ENCODE measurements at regions of chr5 and their contacts with region 1.

Region 1: DNA sequence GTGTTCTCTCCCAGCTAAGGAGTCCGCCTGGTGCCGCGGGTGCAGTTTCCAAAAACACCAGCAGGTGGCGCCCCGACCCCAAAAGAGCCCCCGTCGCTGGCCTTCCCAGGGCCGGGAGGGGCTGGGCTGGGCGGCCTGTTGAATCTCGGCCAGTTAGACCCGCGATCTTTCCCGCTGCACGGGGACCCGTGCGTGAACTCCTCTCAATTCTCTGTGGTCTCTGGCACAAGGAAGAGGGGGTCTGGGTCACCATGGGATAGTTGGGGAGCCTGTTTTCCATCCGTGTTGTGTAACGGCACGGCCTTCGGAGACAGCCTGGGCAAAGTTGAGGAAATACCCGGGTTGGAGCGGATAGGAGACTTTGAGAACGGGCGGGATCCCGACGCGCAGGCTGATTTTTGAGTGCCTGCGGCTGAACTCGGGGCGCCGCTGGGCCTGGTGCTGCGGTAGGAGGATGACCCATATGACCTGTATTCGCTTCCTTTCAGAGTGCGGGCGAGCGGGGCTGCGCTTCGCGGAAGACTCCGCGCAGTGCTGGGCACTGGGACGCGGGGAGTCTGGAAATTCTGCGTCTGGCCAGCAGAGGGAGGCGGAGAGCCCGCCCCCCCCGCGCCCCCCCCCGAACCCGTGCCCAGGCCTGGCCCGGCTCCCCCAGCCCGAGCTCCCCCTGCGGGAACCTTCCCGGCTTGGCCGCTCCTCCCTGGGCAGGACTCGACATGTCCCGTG is 7.9 kb upstream of the PSD2 start:
- DNase-seq: peak; percentile 61 to 91 (median 81)
- ATAC-seq: peak; percentile 81
- H3K4me3 ChIP-seq: peak overlapping the region; percentile 65
- H3K4me3 Mint-ChIP-seq: peak overlapping the region; percentile 77
- H3K27ac ChIP-seq: no peak overlapping the region
- H3K27ac Mint-ChIP-seq: no peak overlapping the region
- H3K4me1 ChIP-seq: peaks cover 17% of the 10 kb centered on the region
- H3K4me1 Mint-ChIP-seq: peaks cover 6% of the 10 kb centered on the region
- H3K27me3 ChIP-seq: peaks cover 10 to 20% of the 10 kb centered on the region in 2 experiments
- H3K27me3 Mint-ChIP-seq: peaks cover 44% of the 10 kb centered on the region
- CTCF ChIP-seq: peak; percentile 94

Region 2: GRCh38 chr5:139765409-139766217 is 22.1 kb before region 1 on chr5:
- CTCF ChIA-PET with region 1: interaction called, 21 read pairs
- POLR2A ChIA-PET with region 1: no interaction called
- intact Hi-C with region 1: no loop called
- DNase-seq: peak; percentile 71 to 92 (median 78)
- ATAC-seq: peak; percentile 92
- H3K4me3 ChIP-seq: peak overlapping the region; percentile 60
- H3K4me3 Mint-ChIP-seq: peak overlapping the region; percentile 48
- H3K27ac ChIP-seq: no peak overlapping the region
- H3K27ac Mint-ChIP-seq: no peak overlapping the region
- H3K4me1 ChIP-seq: peaks cover 19% of the 10 kb centered on the region
- H3K4me1 Mint-ChIP-seq: peaks cover 9% of the 10 kb centered on the region
- H3K27me3 ChIP-seq: peaks cover 29 to 30% of the 10 kb centered on the region in 2 experiments
- H3K27me3 Mint-ChIP-seq: peaks cover 50% of the 10 kb centered on the region
- CTCF ChIP-seq: peak; percentile 100

Region 3: GRCh38 chr5:139774980-139775661 is 12.6 kb before region 1 on chr5:
- CTCF ChIA-PET with region 1: interaction called, 19 read pairs
- POLR2A ChIA-PET with region 1: no interaction called
- intact Hi-C with region 1: no loop called
- DNase-seq: peak; percentile 64 to 84 (median 74)
- ATAC-seq: peak; percentile 99
- H3K4me3 ChIP-seq: no peak overlapping the region
- H3K4me3 Mint-ChIP-seq: no peak overlapping the region
- H3K27ac ChIP-seq: no peak overlapping the region
- H3K27ac Mint-ChIP-seq: no peak overlapping the region
- H3K4me1 ChIP-seq: peaks cover 8% of the 10 kb centered on the region
- H3K4me1 Mint-ChIP-seq: no peaks in the 10 kb centered on the region
- H3K27me3 ChIP-seq: no peaks in the 10 kb centered on the region
- H3K27me3 Mint-ChIP-seq: peaks cover 22% of the 10 kb centered on the region
- CTCF ChIP-seq: peak; percentile 77

Region 4: DNA sequence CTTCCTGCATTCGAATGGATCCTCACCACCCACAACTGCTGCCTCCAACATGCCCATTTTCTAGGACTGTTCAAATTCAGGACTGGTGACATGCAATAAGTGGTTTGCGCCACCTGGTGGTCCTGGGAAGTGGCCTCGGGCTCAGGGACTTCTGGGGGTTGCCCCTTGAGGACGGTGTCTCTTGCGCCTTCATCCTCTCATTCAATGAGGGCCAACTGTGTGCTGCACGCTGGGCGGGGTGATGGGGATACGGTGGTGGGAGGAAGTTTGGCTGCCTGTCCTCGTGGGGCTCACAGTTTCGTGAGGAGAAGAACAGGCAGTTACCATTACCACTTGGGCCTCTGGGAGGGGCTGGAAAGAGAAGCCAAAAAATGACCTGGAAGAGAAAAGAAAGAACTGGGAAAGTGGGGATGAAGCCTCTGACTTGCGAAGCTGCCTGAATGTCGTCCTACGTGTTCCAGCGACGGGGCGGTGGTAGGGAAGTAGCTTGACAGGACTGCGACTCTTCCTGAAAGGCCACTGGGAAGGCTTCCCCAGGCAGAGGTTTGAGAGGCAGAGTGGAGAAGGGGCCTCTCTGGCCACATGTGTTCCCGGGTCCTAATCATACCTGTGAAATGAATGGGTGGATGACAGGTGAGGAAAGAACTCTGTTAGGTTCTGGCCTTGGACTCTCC is 56.9 kb after region 1 on chr5:
- CTCF ChIA-PET with region 1: interaction called, 16 read pairs
- POLR2A ChIA-PET with region 1: interaction called, 4 read pairs
- intact Hi-C with region 1: loop called (anchors 1 kb)
- DNase-seq: peak; percentile 45 to 81 (median 66)
- ATAC-seq: no peak
- H3K4me3 ChIP-seq: no peak overlapping the region
- H3K4me3 Mint-ChIP-seq: peak overlapping the region; percentile 74
- H3K27ac ChIP-seq: no peak overlapping the region
- H3K27ac Mint-ChIP-seq: no peak overlapping the region
- H3K4me1 ChIP-seq: peaks cover 15% of the 10 kb centered on the region
- H3K4me1 Mint-ChIP-seq: peaks cover 17% of the 10 kb centered on the region
- H3K27me3 ChIP-seq: peaks cover 12 to 21% of the 10 kb centered on the region in 2 experiments
- H3K27me3 Mint-ChIP-seq: peaks cover 38% of the 10 kb centered on the region
- CTCF ChIP-seq: peak; percentile 70

Region 5: DNA sequence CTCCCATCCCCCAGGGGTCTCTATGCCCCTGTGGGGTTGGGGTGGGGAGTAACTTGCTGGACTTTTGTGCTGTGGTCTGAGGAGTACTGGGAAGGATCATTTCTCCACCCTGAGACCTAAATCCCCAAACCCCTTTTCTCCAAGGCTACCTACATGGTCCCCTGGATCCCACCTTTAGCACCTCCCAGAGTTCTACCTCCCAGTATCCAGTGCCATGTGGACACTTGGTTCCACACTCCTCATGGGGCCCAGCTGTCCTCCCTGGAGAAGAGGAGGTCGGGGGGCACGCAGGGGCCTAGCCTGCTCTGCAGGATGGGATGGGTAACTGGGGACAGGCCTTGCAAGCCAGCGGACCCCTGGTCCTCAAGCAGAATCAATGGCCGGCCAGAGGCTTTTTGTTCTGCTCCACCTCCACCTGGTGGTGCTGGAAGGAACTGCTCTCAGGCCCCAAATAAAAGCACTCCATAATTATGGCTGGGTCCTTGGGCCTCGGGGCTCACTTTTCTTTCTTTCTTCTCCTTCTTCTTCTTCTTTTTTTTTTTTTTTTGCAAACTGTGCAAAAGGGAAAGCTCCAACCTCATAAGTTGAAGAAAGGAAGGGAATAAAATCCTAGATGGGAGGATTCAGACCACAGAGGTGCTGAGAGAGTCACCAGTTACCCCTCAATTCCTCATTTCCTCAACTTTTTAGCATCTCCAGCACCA is 76.3 kb after region 1 on chr5:
- CTCF ChIA-PET with region 1: interaction called, 6 read pairs
- POLR2A ChIA-PET with region 1: no interaction called
- intact Hi-C with region 1: loop called (anchors 1 kb)
- DNase-seq: peak; percentile 21 to 69 (median 43)
- ATAC-seq: peak; percentile 71
- H3K4me3 ChIP-seq: no peak overlapping the region
- H3K4me3 Mint-ChIP-seq: no peak overlapping the region
- H3K27ac ChIP-seq: no peak overlapping the region
- H3K27ac Mint-ChIP-seq: no peak overlapping the region
- H3K4me1 ChIP-seq: no peaks in the 10 kb centered on the region
- H3K4me1 Mint-ChIP-seq: no peaks in the 10 kb centered on the region
- H3K27me3 ChIP-seq: peaks cover 6 to 9% of the 10 kb centered on the region in 2 experiments
- H3K27me3 Mint-ChIP-seq: peaks cover 3% of the 10 kb centered on the region
- CTCF ChIP-seq: peak; percentile 73

Region 6: DNA sequence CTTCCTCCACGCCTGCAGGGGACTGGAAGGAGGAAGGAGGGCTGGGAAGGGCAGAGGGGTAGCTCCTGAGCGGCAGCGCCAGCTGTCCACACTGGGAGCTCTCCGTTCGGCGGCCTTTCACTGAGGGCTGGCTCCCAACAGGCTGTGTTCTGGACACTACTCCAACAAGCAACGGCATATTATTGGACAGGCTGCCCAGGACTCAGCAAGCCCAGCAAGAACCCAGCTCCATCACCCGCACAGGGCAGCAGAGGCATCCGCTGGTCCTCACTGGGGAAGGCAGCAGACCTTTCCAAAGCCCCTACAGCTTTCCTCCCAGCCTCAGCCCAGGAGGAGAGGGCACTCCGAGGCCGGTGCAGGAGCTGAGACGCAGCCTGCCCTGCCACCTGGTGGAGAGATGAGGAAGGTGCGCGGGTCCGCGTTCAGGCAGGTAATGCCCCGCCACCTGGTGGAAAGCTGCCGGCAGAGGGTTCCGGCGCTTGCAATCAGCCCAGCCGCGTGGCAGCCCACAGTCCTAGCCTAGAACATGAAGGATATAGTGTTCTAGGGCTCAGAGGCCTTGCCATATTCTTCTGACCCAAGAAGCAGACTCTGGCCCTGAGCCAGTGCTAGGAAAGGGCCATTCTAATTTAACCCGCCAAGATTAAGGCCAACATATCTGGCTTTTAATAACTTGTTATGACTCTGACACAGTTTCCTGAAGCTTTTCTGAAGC is 181.0 kb after region 1 on chr5:
- CTCF ChIA-PET with region 1: interaction called, 32 read pairs
- POLR2A ChIA-PET with region 1: interaction called, 5 read pairs
- intact Hi-C with region 1: loop called (anchors 1 kb)
- DNase-seq: peak; percentile 74 to 89 (median 84)
- ATAC-seq: peak; percentile 100
- H3K4me3 ChIP-seq: no peak overlapping the region
- H3K4me3 Mint-ChIP-seq: no peak overlapping the region
- H3K27ac ChIP-seq: no peak overlapping the region
- H3K27ac Mint-ChIP-seq: no peak overlapping the region
- H3K4me1 ChIP-seq: peaks cover 7% of the 10 kb centered on the region
- H3K4me1 Mint-ChIP-seq: no peaks in the 10 kb centered on the region
- H3K27me3 ChIP-seq: peaks cover 0 to 5% of the 10 kb centered on the region in 2 experiments
- H3K27me3 Mint-ChIP-seq: peaks cover 45% of the 10 kb centered on the region
- CTCF ChIP-seq: peak; percentile 98

Region 7: DNA sequence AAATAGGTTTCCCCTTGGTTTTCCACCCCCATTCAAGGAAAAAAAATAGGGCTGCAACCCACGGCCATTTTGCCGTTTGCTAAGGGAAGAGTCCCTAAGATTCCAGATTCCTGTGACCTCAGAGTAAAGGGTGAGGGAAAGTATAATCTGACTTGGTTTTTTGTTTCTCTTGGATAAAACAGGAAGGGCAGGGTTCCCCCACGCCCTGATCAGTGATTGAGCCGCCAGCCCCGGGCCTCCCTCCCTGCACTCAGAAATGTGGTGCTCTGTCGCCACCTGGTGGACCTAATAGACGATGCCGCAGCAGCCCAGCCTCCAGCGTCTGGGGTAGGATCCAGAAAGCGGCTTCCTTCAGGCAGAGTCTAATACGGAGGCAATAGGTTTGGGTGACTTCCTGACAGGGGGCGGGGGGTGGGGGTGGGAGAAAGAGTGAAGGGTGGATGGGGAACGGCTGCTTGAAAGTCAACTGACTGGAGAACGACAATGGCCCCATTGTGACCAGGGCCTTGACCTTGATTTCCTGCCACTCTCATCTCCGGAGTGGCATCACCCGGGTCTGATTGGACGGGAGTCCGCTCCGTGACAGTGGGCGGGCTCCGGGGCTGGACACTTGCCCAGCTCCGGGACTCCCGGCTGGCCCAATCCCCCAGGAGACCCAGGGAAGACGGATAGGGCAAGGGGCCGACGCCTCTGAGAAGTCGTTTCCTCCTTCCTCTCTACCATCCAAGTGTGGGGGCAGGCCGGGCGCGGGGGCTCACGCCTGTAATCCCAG is 369.5 kb after region 1 on chr5:
- CTCF ChIA-PET with region 1: no interaction called
- POLR2A ChIA-PET with region 1: no interaction called
- intact Hi-C with region 1: loop called (anchors 2 kb)
- DNase-seq: peak; percentile 79 to 93 (median 84)
- ATAC-seq: peak; percentile 100
- H3K4me3 ChIP-seq: no peak overlapping the region
- H3K4me3 Mint-ChIP-seq: peak overlapping the region; percentile 50
- H3K27ac ChIP-seq: no peak overlapping the region
- H3K27ac Mint-ChIP-seq: peak overlapping the region; percentile 21
- H3K4me1 ChIP-seq: peaks cover 10% of the 10 kb centered on the region
- H3K4me1 Mint-ChIP-seq: peaks cover 15% of the 10 kb centered on the region
- H3K27me3 ChIP-seq: no peaks in the 10 kb centered on the region
- H3K27me3 Mint-ChIP-seq: no peaks in the 10 kb centered on the region
- CTCF ChIP-seq: peak; percentile 86